B cell (primary cell): ENCODE measurements at regions of chr4 and their contacts with region 1.

Region 1: GRCh38 chr4:128863312-128864075 is 54.0 kb downstream of the JADE1 start:
- DNase-seq: peak; percentile 75
- ATAC-seq: peak; percentile 45
- H3K4me3 ChIP-seq: no peak overlapping the region
- H3K4me3 Mint-ChIP-seq: no peak overlapping the region
- H3K27ac ChIP-seq: no peak overlapping the region
- H3K27ac Mint-ChIP-seq: no peak overlapping the region
- H3K4me1 ChIP-seq: peaks cover 5 to 19% of the 10 kb centered on the region in 2 donors
- H3K4me1 Mint-ChIP-seq: peaks cover 35% of the 10 kb centered on the region
- H3K27me3 ChIP-seq: no peaks in the 10 kb centered on the region
- H3K27me3 Mint-ChIP-seq: no peaks in the 10 kb centered on the region
- CTCF ChIP-seq: peak; percentile 90

Region 2: DNA sequence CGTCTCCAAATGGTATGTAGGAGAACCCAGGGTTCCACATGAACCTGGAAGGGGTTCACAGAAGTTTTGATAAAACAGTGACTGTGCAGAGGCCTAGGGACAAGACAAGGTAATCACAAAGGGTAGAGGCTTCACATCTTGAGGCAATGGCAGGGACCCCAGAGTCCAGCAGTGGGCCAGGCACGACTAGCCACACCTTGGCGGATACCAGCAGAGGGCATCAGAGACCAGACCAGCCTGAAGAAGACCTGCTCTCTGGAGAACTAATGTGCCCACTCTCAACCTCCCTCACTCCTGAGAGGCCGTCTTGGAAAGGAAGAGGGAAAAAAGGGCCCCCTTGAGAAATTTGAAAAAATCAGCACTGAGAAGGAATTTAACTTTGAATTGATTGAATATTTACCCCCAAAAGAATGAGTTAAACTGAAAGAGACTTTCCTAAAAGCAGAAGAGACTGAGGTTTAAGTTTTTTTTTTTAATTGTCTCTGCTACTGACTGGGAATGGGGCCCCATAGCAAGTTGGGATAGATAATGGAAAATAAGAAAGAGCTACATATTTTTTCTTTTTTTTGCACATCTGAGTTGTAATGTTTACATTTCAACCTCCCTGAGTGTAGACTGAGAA is 297.8 kb before region 1 on chr4:
- CTCF ChIA-PET with region 1: interaction called, 4 read pairs
- POLR2A ChIA-PET with region 1: no interaction called
- intact Hi-C with region 1: loop called (anchors 1 kb)
- DNase-seq: peak; percentile 24
- ATAC-seq: no peak
- H3K4me3 ChIP-seq: no peak overlapping the region
- H3K4me3 Mint-ChIP-seq: no peak overlapping the region
- H3K27ac ChIP-seq: no peak overlapping the region
- H3K27ac Mint-ChIP-seq: no peak overlapping the region
- H3K4me1 ChIP-seq: no peaks in the 10 kb centered on the region
- H3K4me1 Mint-ChIP-seq: no peaks in the 10 kb centered on the region
- H3K27me3 ChIP-seq: no peaks in the 10 kb centered on the region
- H3K27me3 Mint-ChIP-seq: peaks cover 28% of the 10 kb centered on the region
- CTCF ChIP-seq: no peak

Region 3: GRCh38 chr4:128782076-128782715 is 81.3 kb before region 1 on chr4:
- CTCF ChIA-PET with region 1: interaction called, 24 read pairs
- POLR2A ChIA-PET with region 1: no interaction called
- intact Hi-C with region 1: no loop called
- DNase-seq: peak; percentile 57
- ATAC-seq: peak; percentile 68
- H3K4me3 ChIP-seq: no peak overlapping the region
- H3K4me3 Mint-ChIP-seq: no peak overlapping the region
- H3K27ac ChIP-seq: no peak overlapping the region
- H3K27ac Mint-ChIP-seq: no peak overlapping the region
- H3K4me1 ChIP-seq: no peaks in the 10 kb centered on the region
- H3K4me1 Mint-ChIP-seq: no peaks in the 10 kb centered on the region
- H3K27me3 ChIP-seq: no peaks in the 10 kb centered on the region
- H3K27me3 Mint-ChIP-seq: peaks cover 3% of the 10 kb centered on the region
- CTCF ChIP-seq: peak; percentile 64

Region 4: DNA sequence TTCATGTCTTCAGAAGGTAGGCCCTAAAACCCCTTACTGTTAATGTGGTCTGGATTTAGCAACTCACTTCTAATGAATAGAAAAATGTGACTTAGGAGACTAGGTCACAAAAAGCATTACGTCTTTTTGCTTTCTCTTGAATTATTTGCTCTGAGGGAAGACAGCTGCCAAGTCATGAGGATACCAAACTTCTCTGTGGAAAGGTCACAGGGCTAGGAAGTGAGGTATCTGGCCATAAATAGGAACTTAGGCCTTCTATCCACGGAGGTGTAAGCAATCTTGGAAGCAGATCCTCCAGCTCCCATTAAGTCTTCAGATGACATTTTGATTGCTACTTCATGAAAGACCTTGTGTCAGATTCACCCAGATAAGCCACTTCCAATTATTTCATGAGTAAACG is 66.6 kb after region 1 on chr4:
- CTCF ChIA-PET with region 1: no interaction called
- POLR2A ChIA-PET with region 1: no interaction called
- intact Hi-C with region 1: no loop called
- DNase-seq: no peak
- ATAC-seq: no peak
- H3K4me3 ChIP-seq: no peak overlapping the region
- H3K4me3 Mint-ChIP-seq: no peak overlapping the region
- H3K27ac ChIP-seq: no peak overlapping the region
- H3K27ac Mint-ChIP-seq: no peak overlapping the region
- H3K4me1 ChIP-seq: no peaks in the 10 kb centered on the region
- H3K4me1 Mint-ChIP-seq: peaks cover 4% of the 10 kb centered on the region
- H3K27me3 ChIP-seq: no peaks in the 10 kb centered on the region
- H3K27me3 Mint-ChIP-seq: no peaks in the 10 kb centered on the region
- CTCF ChIP-seq: no peak